Activated CD4-positive, alpha-beta T cell treated with anti-CD3 and anti-CD28 coated beads, Interleukin-2, amount 10 ng/mL, durations not matched to agents 24 days and 14 days (primary cell): ENCODE measurements at regions of chr1 and their contacts with region 1.

Region 1: GRCh38 chr1:185281245-185281644 is 35.8 kb downstream of the IVNS1ABP start:
- DNase-seq: peak; percentile 78
- H3K4me3 Mint-ChIP-seq: peak overlapping the region; percentile 25
- H3K27ac Mint-ChIP-seq: peak overlapping the region; percentile 78
- H3K4me1 Mint-ChIP-seq: peaks cover 29% of the 10 kb centered on the region
- H3K27me3 Mint-ChIP-seq: no peaks in the 10 kb centered on the region

Region 2: GRCh38 chr1:185224132-185224531 is 57.1 kb before region 1 on chr1:
- intact Hi-C with region 1: no loop called
- DNase-seq: no peak
- H3K4me3 Mint-ChIP-seq: no peak overlapping the region
- H3K27ac Mint-ChIP-seq: no peak overlapping the region
- H3K4me1 Mint-ChIP-seq: no peaks in the 10 kb centered on the region
- H3K27me3 Mint-ChIP-seq: no peaks in the 10 kb centered on the region

Region 3: GRCh38 chr1:185244015-185244747 is 37.1 kb before region 1 on chr1:
- intact Hi-C with region 1: loop called (anchors 5 kb)
- DNase-seq: peak; percentile 61
- H3K4me3 Mint-ChIP-seq: no peak overlapping the region
- H3K27ac Mint-ChIP-seq: no peak overlapping the region
- H3K4me1 Mint-ChIP-seq: peaks cover 9% of the 10 kb centered on the region
- H3K27me3 Mint-ChIP-seq: no peaks in the 10 kb centered on the region